ENCODE measurements at regions of chr2 and their contacts with region 1.

Region 1: GRCh38 chr2:135590619-135591260 is 59.5 kb downstream of the R3HDM1 start:
- DNase-seq: peak in 1 of 35 experiments; percentile 12
- ATAC-seq: peak; percentile 45 to 83 (median 60)
- H3K4me3 ChIP-seq: no peak overlapping the region
- H3K4me3 Mint-ChIP-seq: peak overlapping the region; percentile 4 to 50 (median 13)
- H3K27ac ChIP-seq: peak overlapping the region; percentile 33
- H3K27ac Mint-ChIP-seq: peak overlapping the region; percentile 51 to 85
- H3K4me1 ChIP-seq: peaks cover 3 to 29% of the 10 kb centered on the region in 2 experiments
- H3K4me1 Mint-ChIP-seq: peaks cover 42 to 47% (median 46%) of the 10 kb centered on the region in 3 donors
- H3K27me3 ChIP-seq: no peaks in the 10 kb centered on the region
- H3K27me3 Mint-ChIP-seq: no peaks in the 10 kb centered on the region

Region 2: GRCh38 chr2:135573620-135574019 is 17.1 kb before region 1 on chr2:
- CTCF ChIA-PET with region 1: interaction called, 4 to 6 read pairs
- POLR2A ChIA-PET with region 1: interaction called in 1 of 2 experiments, 11 read pairs
- DNase-seq: no peak
- ATAC-seq: no peak
- H3K4me3 ChIP-seq: no peak overlapping the region
- H3K4me3 Mint-ChIP-seq: no peak overlapping the region
- H3K27ac ChIP-seq: no peak overlapping the region
- H3K27ac Mint-ChIP-seq: no peak overlapping the region
- H3K4me1 ChIP-seq: no peaks in the 10 kb centered on the region
- H3K4me1 Mint-ChIP-seq: peaks cover 0 to 5% (median 1%) of the 10 kb centered on the region in 3 donors
- H3K27me3 ChIP-seq: no peaks in the 10 kb centered on the region
- H3K27me3 Mint-ChIP-seq: no peaks in the 10 kb centered on the region

Region 3: GRCh38 chr2:135657806-135658582 is 67.3 kb after region 1 on chr2:
- CTCF ChIA-PET with region 1: no interaction called
- POLR2A ChIA-PET with region 1: no interaction called
- DNase-seq: peak; percentile 35 to 79 (median 62)
- ATAC-seq: peak; percentile 96
- H3K4me3 ChIP-seq: peak overlapping the region in 1 of 2 donors; percentile 23
- H3K4me3 Mint-ChIP-seq: peak overlapping the region; percentile 68 to 80 (median 80)
- H3K27ac ChIP-seq: peak overlapping the region; percentile 52
- H3K27ac Mint-ChIP-seq: peak overlapping the region; percentile 92 to 96
- H3K4me1 ChIP-seq: peaks cover 13 to 14% of the 10 kb centered on the region in 2 experiments
- H3K4me1 Mint-ChIP-seq: peaks cover 10 to 17% (median 10%) of the 10 kb centered on the region in 3 donors
- H3K27me3 ChIP-seq: no peaks in the 10 kb centered on the region
- H3K27me3 Mint-ChIP-seq: no peaks in the 10 kb centered on the region

Region 4: GRCh38 chr2:135839713-135840112 is 249.0 kb after region 1 on chr2:
- CTCF ChIA-PET with region 1: no interaction called
- POLR2A ChIA-PET with region 1: no interaction called
- DNase-seq: no peak
- ATAC-seq: no peak
- H3K4me3 ChIP-seq: no peak overlapping the region
- H3K4me3 Mint-ChIP-seq: no peak overlapping the region
- H3K27ac ChIP-seq: no peak overlapping the region
- H3K27ac Mint-ChIP-seq: no peak overlapping the region
- H3K4me1 ChIP-seq: peaks cover 2 to 3% of the 10 kb centered on the region in 2 experiments
- H3K4me1 Mint-ChIP-seq: peaks cover 13 to 25% (median 16%) of the 10 kb centered on the region in 3 donors
- H3K27me3 ChIP-seq: no peaks in the 10 kb centered on the region
- H3K27me3 Mint-ChIP-seq: no peaks in the 10 kb centered on the region

Measured in T-cell (primary cell).